ENCODE measurements at regions of chr17 and their contacts with region 1.

Region 1: GRCh38 chr17:44775136-44775837 is 16.5 kb downstream of the ADAM11 start:
- DNase-seq: peak in 30 of 35 experiments; percentile 91 to 99 (median 96)
- ATAC-seq: peak; percentile 92 to 94 (median 93)
- H3K4me3 ChIP-seq: peak overlapping the region; percentile 66 to 69
- H3K4me3 Mint-ChIP-seq: peak overlapping the region; percentile 82 to 90 (median 83)
- H3K27ac ChIP-seq: no peak overlapping the region
- H3K27ac Mint-ChIP-seq: peak overlapping the region; percentile 82
- H3K4me1 ChIP-seq: peaks cover 7 to 34% of the 10 kb centered on the region in 2 experiments
- H3K4me1 Mint-ChIP-seq: peaks cover 6 to 12% (median 7%) of the 10 kb centered on the region in 3 donors
- H3K27me3 ChIP-seq: peaks cover 0 to 62% of the 10 kb centered on the region in 2 experiments
- H3K27me3 Mint-ChIP-seq: peaks cover 0 to 11% of the 10 kb centered on the region in 2 donors

Region 2: DNA sequence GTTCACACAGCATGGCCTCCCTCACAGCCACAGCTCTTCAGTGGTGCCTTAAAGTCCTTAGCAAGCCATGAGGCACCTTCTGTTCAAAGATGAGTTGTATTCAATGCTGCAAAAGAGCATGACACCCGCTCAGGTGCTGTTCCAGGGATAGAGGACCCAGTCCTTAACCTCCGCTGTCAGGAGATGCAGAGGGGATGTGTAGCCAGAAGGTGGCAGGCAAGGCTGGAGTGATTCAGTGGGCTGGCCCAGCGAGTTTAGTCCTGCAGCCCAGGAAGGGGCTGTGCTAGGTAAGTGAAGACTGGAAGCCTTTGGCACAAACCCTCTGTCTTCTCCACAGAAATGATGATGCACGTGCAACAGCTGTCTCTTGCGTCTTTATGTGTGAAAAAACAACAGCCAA is 41.5 kb before region 1 on chr17:
- CTCF ChIA-PET with region 1: no interaction called
- POLR2A ChIA-PET with region 1: no interaction called
- DNase-seq: no peak
- ATAC-seq: no peak
- H3K4me3 ChIP-seq: no peak overlapping the region
- H3K4me3 Mint-ChIP-seq: no peak overlapping the region
- H3K27ac ChIP-seq: no peak overlapping the region
- H3K27ac Mint-ChIP-seq: no peak overlapping the region
- H3K4me1 ChIP-seq: no peaks in the 10 kb centered on the region
- H3K4me1 Mint-ChIP-seq: no peaks in the 10 kb centered on the region
- H3K27me3 ChIP-seq: no peaks in the 10 kb centered on the region
- H3K27me3 Mint-ChIP-seq: no peaks in the 10 kb centered on the region

Region 3: GRCh38 chr17:44865931-44866330 is 90.6 kb after region 1 on chr17:
- CTCF ChIA-PET with region 1: interaction called, 9 to 10 read pairs
- POLR2A ChIA-PET with region 1: no interaction called
- DNase-seq: no peak
- ATAC-seq: no peak
- H3K4me3 ChIP-seq: no peak overlapping the region
- H3K4me3 Mint-ChIP-seq: no peak overlapping the region
- H3K27ac ChIP-seq: no peak overlapping the region
- H3K27ac Mint-ChIP-seq: no peak overlapping the region
- H3K4me1 ChIP-seq: no peaks in the 10 kb centered on the region
- H3K4me1 Mint-ChIP-seq: no peaks in the 10 kb centered on the region
- H3K27me3 ChIP-seq: no peaks in the 10 kb centered on the region
- H3K27me3 Mint-ChIP-seq: no peaks in the 10 kb centered on the region

Region 4: DNA sequence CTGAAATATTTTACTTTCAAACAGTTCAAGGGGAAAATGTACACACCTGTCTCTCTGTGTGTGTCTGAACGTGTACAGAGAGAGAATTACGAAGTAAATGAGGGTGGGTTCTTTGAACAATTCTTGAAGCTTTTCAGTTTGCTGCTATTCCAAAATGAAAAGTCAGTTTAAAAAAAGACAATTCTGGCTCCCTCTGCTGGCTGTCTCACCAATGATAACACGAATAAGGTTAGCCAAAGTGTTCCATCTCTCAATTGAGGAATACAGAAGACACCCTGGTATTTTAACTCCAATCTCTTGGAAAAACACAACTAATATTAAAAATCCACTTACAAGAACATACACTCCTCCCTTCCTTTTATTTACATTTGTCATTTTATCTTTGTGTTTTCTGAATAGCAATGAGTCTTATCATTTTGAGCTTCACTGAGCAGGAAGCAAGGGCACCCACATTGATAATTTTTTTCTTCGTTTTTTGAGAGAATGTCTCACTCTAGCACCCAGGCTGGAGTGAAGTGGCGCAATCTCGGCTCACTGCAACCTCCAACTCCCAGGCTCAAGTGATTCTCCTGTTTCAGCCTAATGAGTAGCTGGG is 103.4 kb after region 1 on chr17:
- CTCF ChIA-PET with region 1: interaction called in 1 of 2 experiments, 10 read pairs
- POLR2A ChIA-PET with region 1: no interaction called
- DNase-seq: peak in 10 of 35 experiments; percentile 5 to 48 (median 18)
- ATAC-seq: no peak
- H3K4me3 ChIP-seq: no peak overlapping the region
- H3K4me3 Mint-ChIP-seq: no peak overlapping the region
- H3K27ac ChIP-seq: no peak overlapping the region
- H3K27ac Mint-ChIP-seq: no peak overlapping the region
- H3K4me1 ChIP-seq: no peaks in the 10 kb centered on the region
- H3K4me1 Mint-ChIP-seq: peaks cover 0 to 3% (median 0%) of the 10 kb centered on the region in 3 donors
- H3K27me3 ChIP-seq: no peaks in the 10 kb centered on the region
- H3K27me3 Mint-ChIP-seq: no peaks in the 10 kb centered on the region

Measured in T-cell (primary cell).